ENCODE measurements at regions of chr10 and their contacts with region 1.

Region 1: GRCh38 chr10:102420810-102421644 is at the start of gene FBXL15:
- DNase-seq: peak; percentile 95
- ATAC-seq: peak; percentile 75
- H3K4me3 Mint-ChIP-seq: peak within 1 kb of the TSS; percentile 93
- H3K27ac Mint-ChIP-seq: peak within 1 kb of the TSS; percentile 91
- H3K4me1 Mint-ChIP-seq: peaks cover 26% of the 10 kb centered on the region
- H3K27me3 Mint-ChIP-seq: peaks cover 22% of the 10 kb centered on the region
- total RNA-seq, gene FBXL15: 11.7 to 16.3 TPM

Region 2: GRCh38 chr10:102352066-102352715 is 68.8 kb before region 1 on chr10:
- POLR2A ChIA-PET with region 1: no interaction called
- DNase-seq: peak; percentile 64
- ATAC-seq: peak; percentile 72
- H3K4me3 Mint-ChIP-seq: no peak overlapping the region
- H3K27ac Mint-ChIP-seq: no peak overlapping the region
- H3K4me1 Mint-ChIP-seq: peaks cover 3% of the 10 kb centered on the region
- H3K27me3 Mint-ChIP-seq: no peaks in the 10 kb centered on the region

Region 3: DNA sequence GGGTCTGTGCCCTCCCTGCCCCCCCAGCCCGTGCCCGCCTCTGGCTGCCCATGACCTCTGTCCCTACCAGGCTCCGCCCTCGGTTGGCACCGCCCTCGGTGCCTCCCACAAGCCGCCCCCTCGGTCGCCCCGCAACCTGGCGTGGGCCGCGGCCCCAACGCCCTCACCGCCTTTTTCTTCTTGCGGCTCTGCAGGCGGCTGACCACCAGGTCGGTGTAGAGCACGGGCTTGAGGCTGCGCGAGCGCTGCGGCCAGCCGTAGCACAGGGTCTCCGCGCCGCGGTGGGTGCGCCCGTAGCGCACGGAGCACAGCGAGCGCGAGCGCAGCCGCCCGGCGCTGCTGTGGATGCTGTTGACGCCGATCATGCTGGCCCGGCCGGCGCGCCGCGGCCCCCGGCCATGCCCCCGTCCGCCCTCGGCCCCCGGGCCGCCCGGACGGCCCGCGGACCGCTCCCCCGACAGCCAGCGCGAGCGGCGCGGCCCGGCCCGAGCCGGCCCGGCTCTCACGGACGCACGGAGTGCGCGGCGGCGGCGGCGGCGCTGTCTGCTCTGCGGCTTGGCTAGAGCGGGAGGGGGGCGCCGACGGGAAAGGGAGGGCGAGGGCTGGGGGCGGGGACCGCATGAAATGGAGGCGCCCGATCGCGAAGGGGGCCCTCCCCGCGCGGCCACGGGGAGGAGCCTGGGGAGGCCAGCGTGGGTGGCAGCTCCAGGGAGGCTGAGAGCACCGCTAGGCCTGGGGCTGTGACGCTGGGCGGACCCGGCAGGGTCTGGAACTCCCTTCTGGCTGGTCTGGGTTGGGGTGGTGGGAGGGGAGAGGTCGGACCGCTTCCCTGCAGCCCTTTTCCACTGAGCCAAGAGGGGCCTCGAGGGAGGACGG is 12.1 kb before region 1 on chr10:
- POLR2A ChIA-PET with region 1: interaction called, 20 read pairs
- DNase-seq: peak; percentile 72
- ATAC-seq: peak; percentile 59
- H3K4me3 Mint-ChIP-seq: peak overlapping the region; percentile 74
- H3K27ac Mint-ChIP-seq: no peak overlapping the region
- H3K4me1 Mint-ChIP-seq: peaks cover 23% of the 10 kb centered on the region
- H3K27me3 Mint-ChIP-seq: peaks cover 29% of the 10 kb centered on the region

Region 4: GRCh38 chr10:102432162-102432950 is 11.3 kb after region 1 on chr10 and contains the start of gene CUEDC2:
- POLR2A ChIA-PET with region 1: interaction called, 140 read pairs
- DNase-seq: peak; percentile 98
- ATAC-seq: peak; percentile 92
- H3K4me3 Mint-ChIP-seq: peak within 1 kb of the TSS; percentile 87
- H3K27ac Mint-ChIP-seq: peak within 1 kb of the TSS; percentile 94
- H3K4me1 Mint-ChIP-seq: peaks cover 36% of the 10 kb centered on the region
- H3K27me3 Mint-ChIP-seq: no peaks in the 10 kb centered on the region
- total RNA-seq, gene CUEDC2: 68.6 to 70.3 TPM

Region 5: DNA sequence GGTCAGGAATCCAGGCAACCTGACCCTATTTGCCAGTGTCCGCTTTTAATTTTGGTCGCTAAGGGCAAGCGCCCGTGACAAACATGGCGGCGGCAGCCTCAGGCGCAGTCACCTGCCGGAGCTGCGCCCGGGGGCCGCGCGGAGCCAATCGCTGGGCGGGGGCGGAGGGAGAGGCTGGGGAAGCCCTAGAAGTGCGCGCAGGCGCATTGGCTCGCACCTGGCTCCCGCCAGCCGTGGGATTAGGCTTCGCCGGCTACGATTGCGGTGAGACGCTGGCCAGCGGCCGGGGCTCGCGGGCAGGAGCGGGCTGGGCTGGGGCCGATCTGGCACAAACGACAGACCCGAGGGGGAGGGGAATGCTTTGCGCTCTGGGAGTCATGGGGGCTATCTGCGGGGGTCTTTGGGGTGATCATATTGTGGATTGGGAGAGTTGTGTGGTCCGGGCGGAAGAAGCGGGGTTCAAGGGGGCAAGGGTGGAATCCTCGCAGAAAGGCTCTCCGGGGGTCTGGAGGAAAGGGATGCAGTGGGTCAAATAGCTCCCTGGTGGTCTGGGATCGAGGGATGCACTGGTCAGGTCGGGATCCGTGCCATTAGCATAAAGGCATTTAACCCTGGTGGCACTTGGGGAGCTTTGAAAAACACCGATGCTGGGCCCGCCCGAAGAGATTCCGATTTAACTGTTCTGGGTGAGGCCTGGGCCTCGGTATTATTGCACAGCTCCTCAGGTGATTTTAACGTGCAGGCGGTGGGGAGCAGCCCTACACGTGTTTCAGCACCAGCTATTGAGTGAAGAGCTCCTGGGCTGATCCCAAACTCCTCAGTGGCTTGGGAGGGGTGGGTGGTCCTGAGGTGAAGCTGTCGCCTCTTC is 40.4 kb after region 1 on chr10:
- POLR2A ChIA-PET with region 1: interaction called, 19 read pairs
- DNase-seq: peak; percentile 94
- ATAC-seq: peak; percentile 98
- H3K4me3 Mint-ChIP-seq: peak overlapping the region; percentile 96
- H3K27ac Mint-ChIP-seq: peak overlapping the region; percentile 84
- H3K4me1 Mint-ChIP-seq: peaks cover 25% of the 10 kb centered on the region
- H3K27me3 Mint-ChIP-seq: no peaks in the 10 kb centered on the region